ENCODE measurements at regions of chr1 and their contacts with region 1.

Region 1: GRCh38 chr1:5514519-5515183 is 477.6 kb downstream of the NPHP4 start:
- DNase-seq: peak; percentile 79
- ATAC-seq: peak; percentile 66
- H3K4me3 Mint-ChIP-seq: no peak overlapping the region
- H3K27ac Mint-ChIP-seq: no peak overlapping the region
- H3K4me1 Mint-ChIP-seq: no peaks in the 10 kb centered on the region
- H3K27me3 Mint-ChIP-seq: peaks cover 5% of the 10 kb centered on the region
- CTCF ChIP-seq: peak; percentile 100

Region 2: GRCh38 chr1:5494518-5494917 is 20.1 kb before region 1 on chr1:
- CTCF ChIA-PET with region 1: interaction called, 13 read pairs
- POLR2A ChIA-PET with region 1: no interaction called
- intact Hi-C with region 1: no loop called
- DNase-seq: no peak
- ATAC-seq: no peak
- H3K4me3 Mint-ChIP-seq: no peak overlapping the region
- H3K27ac Mint-ChIP-seq: no peak overlapping the region
- H3K4me1 Mint-ChIP-seq: peaks cover 2% of the 10 kb centered on the region
- H3K27me3 Mint-ChIP-seq: peaks cover 8% of the 10 kb centered on the region
- CTCF ChIP-seq: no peak

Region 3: DNA sequence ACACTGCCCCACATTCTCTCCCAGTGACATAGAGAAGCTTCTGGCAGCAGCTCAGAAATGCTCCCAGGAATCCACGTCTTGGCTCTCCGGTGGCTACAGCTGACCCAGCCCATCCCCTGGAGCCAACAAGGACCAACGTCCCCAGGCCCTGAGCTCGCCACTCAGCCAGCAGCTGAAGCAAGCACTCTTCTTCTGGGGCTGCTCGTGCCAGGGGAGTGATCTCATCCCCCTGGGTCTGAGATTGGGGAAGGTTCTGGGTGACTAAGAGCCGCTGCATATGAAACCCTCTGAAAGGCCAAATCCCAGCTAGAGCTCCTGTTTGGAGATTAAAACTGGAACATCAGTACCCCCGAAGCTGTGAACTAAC is 10.3 kb before region 1 on chr1:
- CTCF ChIA-PET with region 1: interaction called, 25 read pairs
- POLR2A ChIA-PET with region 1: no interaction called
- intact Hi-C with region 1: no loop called
- DNase-seq: no peak
- ATAC-seq: no peak
- H3K4me3 Mint-ChIP-seq: no peak overlapping the region
- H3K27ac Mint-ChIP-seq: no peak overlapping the region
- H3K4me1 Mint-ChIP-seq: no peaks in the 10 kb centered on the region
- H3K27me3 Mint-ChIP-seq: no peaks in the 10 kb centered on the region
- CTCF ChIP-seq: no peak

Region 4: DNA sequence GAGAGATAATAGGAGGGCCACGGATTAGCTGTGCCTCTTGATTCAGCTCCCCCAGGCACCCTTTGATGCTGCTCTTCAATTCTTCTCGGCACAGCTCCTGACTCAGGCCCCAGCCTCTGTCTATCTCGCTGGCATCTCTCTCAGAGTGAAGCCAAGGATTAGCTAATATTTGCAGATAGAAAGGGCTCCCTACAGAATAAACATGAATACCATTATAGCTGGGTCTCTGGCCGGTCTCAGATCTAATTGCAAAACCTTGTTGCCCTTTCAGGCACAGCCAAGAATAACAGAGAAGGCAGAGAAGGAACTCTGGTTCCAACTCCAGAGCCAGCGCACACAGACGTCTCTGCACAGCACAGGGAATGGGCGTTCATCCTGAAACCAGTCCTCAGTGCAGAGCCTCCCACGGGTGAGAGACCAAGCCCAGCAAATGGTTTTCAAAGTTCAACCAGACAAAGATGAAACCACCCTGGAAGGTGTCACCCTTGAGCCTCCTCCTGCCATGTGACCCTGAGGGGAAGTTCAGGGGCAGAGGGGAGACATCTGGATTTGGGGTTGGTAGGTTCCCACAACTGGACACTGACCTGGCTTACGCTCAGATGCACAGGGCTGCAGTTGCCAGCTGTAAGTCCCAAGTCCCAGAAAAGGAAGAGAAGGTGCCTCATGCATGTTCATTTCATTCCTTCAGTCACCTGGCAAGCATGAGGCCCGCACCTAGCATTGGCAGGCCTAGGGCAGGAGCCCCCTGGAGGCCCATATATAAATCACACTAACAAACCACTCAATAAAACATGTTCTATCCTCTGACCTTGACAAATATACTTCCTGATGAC is 83.6 kb after region 1 on chr1:
- CTCF ChIA-PET with region 1: interaction called, 3 read pairs
- POLR2A ChIA-PET with region 1: no interaction called
- intact Hi-C with region 1: loop called (anchors 10 kb)
- DNase-seq: no peak
- ATAC-seq: no peak
- H3K4me3 Mint-ChIP-seq: no peak overlapping the region
- H3K27ac Mint-ChIP-seq: no peak overlapping the region
- H3K4me1 Mint-ChIP-seq: no peaks in the 10 kb centered on the region
- H3K27me3 Mint-ChIP-seq: peaks cover 6% of the 10 kb centered on the region
- CTCF ChIP-seq: no peak

Region 5: GRCh38 chr1:5745776-5746610 is 231.3 kb after region 1 on chr1:
- CTCF ChIA-PET with region 1: interaction called, 42 read pairs
- POLR2A ChIA-PET with region 1: no interaction called
- intact Hi-C with region 1: loop called (anchors 2 kb)
- DNase-seq: peak; percentile 63
- ATAC-seq: peak; percentile 87
- H3K4me3 Mint-ChIP-seq: no peak overlapping the region
- H3K27ac Mint-ChIP-seq: no peak overlapping the region
- H3K4me1 Mint-ChIP-seq: no peaks in the 10 kb centered on the region
- H3K27me3 Mint-ChIP-seq: peaks cover 14% of the 10 kb centered on the region
- CTCF ChIP-seq: peak; percentile 88